Caco-2 (cell line): ENCODE measurements at regions of chr12 and their contacts with region 1.

Region 1: GRCh38 chr12:7959701-7960121 is 23.7 kb upstream of the SLC2A3 start:
- DNase-seq: peak; percentile 87 to 91
- H3K4me3 ChIP-seq: peak overlapping the region; percentile 58
- H3K4me3 Mint-ChIP-seq: peak overlapping the region; percentile 73
- H3K27ac Mint-ChIP-seq: peak overlapping the region; percentile 47
- H3K4me1 ChIP-seq: peaks cover 55% of the 10 kb centered on the region
- H3K4me1 Mint-ChIP-seq: peaks cover 43% of the 10 kb centered on the region
- H3K27me3 ChIP-seq: no peaks in the 10 kb centered on the region
- H3K27me3 Mint-ChIP-seq: no peaks in the 10 kb centered on the region
- CTCF ChIP-seq: no peak

Region 2: GRCh38 chr12:7981446-7981845 is 21.7 kb after region 1 on chr12:
- CTCF ChIA-PET with region 1: interaction called, 5 read pairs
- POLR2A ChIA-PET with region 1: interaction called, 6 read pairs
- intact Hi-C with region 1: loop called (anchors 1 kb)
- DNase-seq: peak; percentile 67 to 68
- H3K4me3 ChIP-seq: no peak overlapping the region
- H3K4me3 Mint-ChIP-seq: peak overlapping the region; percentile 49
- H3K27ac Mint-ChIP-seq: peak overlapping the region; percentile 93
- H3K4me1 ChIP-seq: peaks cover 78% of the 10 kb centered on the region
- H3K4me1 Mint-ChIP-seq: peaks cover 69% of the 10 kb centered on the region
- H3K27me3 ChIP-seq: no peaks in the 10 kb centered on the region
- H3K27me3 Mint-ChIP-seq: no peaks in the 10 kb centered on the region
- CTCF ChIP-seq: no peak

Region 3: GRCh38 chr12:7989827-7990551 is 30.3 kb after region 1 on chr12:
- CTCF ChIA-PET with region 1: interaction called, 8 read pairs
- POLR2A ChIA-PET with region 1: interaction called, 5 read pairs
- intact Hi-C with region 1: loop called (anchors 1 kb)
- DNase-seq: peak; percentile 71 to 85
- H3K4me3 ChIP-seq: no peak overlapping the region
- H3K4me3 Mint-ChIP-seq: peak overlapping the region; percentile 52
- H3K27ac Mint-ChIP-seq: peak overlapping the region; percentile 82
- H3K4me1 ChIP-seq: peaks cover 94% of the 10 kb centered on the region
- H3K4me1 Mint-ChIP-seq: peaks cover 31% of the 10 kb centered on the region
- H3K27me3 ChIP-seq: no peaks in the 10 kb centered on the region
- H3K27me3 Mint-ChIP-seq: no peaks in the 10 kb centered on the region
- CTCF ChIP-seq: no peak

Region 4: GRCh38 chr12:7995266-7995963 is 35.7 kb after region 1 on chr12:
- CTCF ChIA-PET with region 1: interaction called, 8 read pairs
- POLR2A ChIA-PET with region 1: interaction called, 5 read pairs
- intact Hi-C with region 1: loop called (anchors 1 kb)
- DNase-seq: peak; percentile 90 to 91
- H3K4me3 ChIP-seq: no peak overlapping the region
- H3K4me3 Mint-ChIP-seq: no peak overlapping the region
- H3K27ac Mint-ChIP-seq: no peak overlapping the region
- H3K4me1 ChIP-seq: peaks cover 46% of the 10 kb centered on the region
- H3K4me1 Mint-ChIP-seq: peaks cover 13% of the 10 kb centered on the region
- H3K27me3 ChIP-seq: no peaks in the 10 kb centered on the region
- H3K27me3 Mint-ChIP-seq: no peaks in the 10 kb centered on the region
- CTCF ChIP-seq: peak; percentile 73 to 94

Region 5: GRCh38 chr12:8077207-8077606 is 117.5 kb after region 1 on chr12:
- CTCF ChIA-PET with region 1: no interaction called
- POLR2A ChIA-PET with region 1: no interaction called
- intact Hi-C with region 1: no loop called
- DNase-seq: no peak
- H3K4me3 ChIP-seq: no peak overlapping the region
- H3K4me3 Mint-ChIP-seq: no peak overlapping the region
- H3K27ac Mint-ChIP-seq: no peak overlapping the region
- H3K4me1 ChIP-seq: peaks cover 9% of the 10 kb centered on the region; the same call in 1 of the 2 replicates
- H3K4me1 Mint-ChIP-seq: peaks cover 14% of the 10 kb centered on the region
- H3K27me3 ChIP-seq: no peaks in the 10 kb centered on the region
- H3K27me3 Mint-ChIP-seq: no peaks in the 10 kb centered on the region
- CTCF ChIP-seq: no peak